AG04450 (cell line): ENCODE measurements at regions of chr1 and their contacts with region 1.

Region 1: DNA sequence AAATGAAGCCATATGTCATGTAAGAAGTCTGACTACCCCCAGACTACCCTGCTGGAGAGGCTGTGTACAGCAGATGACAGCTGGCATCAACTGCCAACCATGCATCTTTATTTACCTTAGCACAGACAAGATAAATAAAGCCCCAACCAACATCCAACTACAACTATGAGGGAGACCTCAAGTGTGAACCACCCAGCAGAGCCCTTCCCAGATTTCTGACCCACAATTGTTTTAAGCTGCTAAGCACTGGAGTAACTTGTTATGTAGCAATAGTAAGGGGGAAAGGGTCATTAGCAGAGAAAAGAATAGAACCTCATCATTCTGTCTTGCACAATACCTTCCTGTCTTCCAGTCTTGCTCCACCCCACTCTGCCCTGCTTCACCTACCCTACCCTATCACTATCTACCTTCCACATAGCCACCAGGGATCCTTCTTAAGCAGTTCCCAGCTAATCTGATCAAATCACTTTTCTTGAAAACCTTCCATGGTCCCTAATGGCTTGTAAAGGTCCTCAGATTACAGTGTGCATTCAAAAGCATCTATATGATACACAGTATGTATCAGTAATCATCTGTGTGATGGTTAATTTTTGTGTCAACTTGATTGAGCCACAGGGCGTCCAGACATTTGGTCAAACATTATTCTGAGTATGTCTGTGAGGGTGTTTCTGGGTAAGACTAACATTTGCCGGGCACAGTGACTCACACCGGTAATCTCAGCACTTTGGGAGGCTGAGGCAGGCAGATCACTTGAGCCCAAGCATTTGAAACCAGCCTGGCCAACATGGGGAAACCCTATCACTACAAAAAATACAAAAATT is 19.6 kb upstream of the RBM15 start:
- DNase-seq: no peak
- H3K4me3 ChIP-seq: no peak overlapping the region
- H3K27ac ChIP-seq: no peak overlapping the region
- H3K27me3 ChIP-seq: peaks cover 10% of the 10 kb centered on the region
- CTCF ChIP-seq: no peak

Region 2: GRCh38 chr1:110196917-110197765 is 122.4 kb before region 1 on chr1:
- CTCF ChIA-PET with region 1: interaction called, 1,035 read pairs
- POLR2A ChIA-PET with region 1: no interaction called
- DNase-seq: no peak
- H3K4me3 ChIP-seq: no peak overlapping the region
- H3K27ac ChIP-seq: no peak overlapping the region
- H3K27me3 ChIP-seq: peaks cover 3% of the 10 kb centered on the region
- CTCF ChIP-seq: peak; percentile 97